Sciatic nerve (tissue), 2 donors: ENCODE measurements at regions of chr5 and their contacts with region 1.

Region 1: GRCh38 chr5:108341866-108342265 is 40.0 kb downstream of the FBXL17 start:
- DNase-seq: no peak
- ATAC-seq: no peak

Region 2: GRCh38 chr5:108295578-108296368 is 46.1 kb before region 1 on chr5:
- intact Hi-C with region 1: loop called (anchors 2 kb)
- DNase-seq: no peak
- ATAC-seq: no peak